B cell (primary cell): ENCODE measurements at regions of chr7 and their contacts with region 1.

Region 1: GRCh38 chr7:101138213-101138870 is 11.4 kb downstream of the SERPINE1 start:
- DNase-seq: peak; percentile 62
- ATAC-seq: peak; percentile 86
- H3K4me3 ChIP-seq: no peak overlapping the region
- H3K4me3 Mint-ChIP-seq: peak overlapping the region; percentile 74
- H3K27ac ChIP-seq: no peak overlapping the region
- H3K27ac Mint-ChIP-seq: peak overlapping the region; percentile 77
- H3K4me1 ChIP-seq: peaks cover 0 to 7% of the 10 kb centered on the region in 2 donors
- H3K4me1 Mint-ChIP-seq: peaks cover 13% of the 10 kb centered on the region
- H3K27me3 ChIP-seq: peaks cover 0 to 12% (median 5%) of the 10 kb centered on the region in 4 experiments
- H3K27me3 Mint-ChIP-seq: peaks cover 31% of the 10 kb centered on the region
- CTCF ChIP-seq: peak; percentile 72

Region 2: GRCh38 chr7:100444311-100445278 is 693.7 kb before region 1 on chr7:
- CTCF ChIA-PET with region 1: no interaction called
- POLR2A ChIA-PET with region 1: no interaction called
- intact Hi-C with region 1: no loop called
- DNase-seq: no peak
- ATAC-seq: peak; percentile 47
- H3K4me3 ChIP-seq: no peak overlapping the region
- H3K4me3 Mint-ChIP-seq: no peak overlapping the region
- H3K27ac ChIP-seq: peak overlapping the region; percentile 30 to 51
- H3K27ac Mint-ChIP-seq: peak overlapping the region; percentile 77
- H3K4me1 ChIP-seq: peaks cover 15 to 22% of the 10 kb centered on the region in 2 donors
- H3K4me1 Mint-ChIP-seq: peaks cover 15% of the 10 kb centered on the region
- H3K27me3 ChIP-seq: no peaks in the 10 kb centered on the region
- H3K27me3 Mint-ChIP-seq: no peaks in the 10 kb centered on the region
- CTCF ChIP-seq: no peak

Region 3: GRCh38 chr7:100889761-100890634 is 248.3 kb before region 1 on chr7:
- CTCF ChIA-PET with region 1: interaction called, 7 read pairs
- POLR2A ChIA-PET with region 1: no interaction called
- intact Hi-C with region 1: loop called (anchors 10 kb)
- DNase-seq: peak; percentile 94
- ATAC-seq: peak; percentile 82
- H3K4me3 ChIP-seq: peak overlapping the region in 4 of 5 experiments; percentile 57 to 80 (median 72)
- H3K4me3 Mint-ChIP-seq: peak overlapping the region; percentile 87
- H3K27ac ChIP-seq: no peak overlapping the region
- H3K27ac Mint-ChIP-seq: peak overlapping the region; percentile 82
- H3K4me1 ChIP-seq: peaks cover 43 to 54% of the 10 kb centered on the region in 2 donors
- H3K4me1 Mint-ChIP-seq: peaks cover 48% of the 10 kb centered on the region
- H3K27me3 ChIP-seq: peaks cover 0 to 46% (median 12%) of the 10 kb centered on the region in 4 experiments
- H3K27me3 Mint-ChIP-seq: peaks cover 22% of the 10 kb centered on the region
- CTCF ChIP-seq: no peak

Region 4: DNA sequence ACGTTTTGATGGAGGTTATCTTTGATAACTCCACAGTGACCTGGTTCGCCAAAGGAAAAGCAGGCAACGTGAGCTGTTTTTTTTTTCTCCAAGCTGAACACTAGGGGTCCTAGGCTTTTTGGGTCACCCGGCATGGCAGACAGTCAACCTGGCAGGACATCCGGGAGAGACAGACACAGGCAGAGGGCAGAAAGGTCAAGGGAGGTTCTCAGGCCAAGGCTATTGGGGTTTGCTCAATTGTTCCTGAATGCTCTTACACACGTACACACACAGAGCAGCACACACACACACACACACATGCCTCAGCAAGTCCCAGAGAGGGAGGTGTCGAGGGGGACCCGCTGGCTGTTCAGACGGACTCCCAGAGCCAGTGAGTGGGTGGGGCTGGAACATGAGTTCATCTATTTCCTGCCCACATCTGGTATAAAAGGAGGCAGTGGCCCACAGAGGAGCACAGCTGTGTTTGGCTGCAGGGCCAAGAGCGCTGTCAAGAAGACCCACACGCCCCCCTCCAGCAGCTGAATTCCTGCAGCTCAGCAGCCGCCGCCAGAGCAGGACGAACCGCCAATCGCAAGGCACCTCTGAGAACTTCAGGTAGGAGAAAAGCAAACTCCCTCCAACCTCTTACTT is 11.6 kb before region 1 on chr7 and contains the start of gene SERPINE1:
- CTCF ChIA-PET with region 1: interaction called, 28 read pairs
- POLR2A ChIA-PET with region 1: no interaction called
- intact Hi-C with region 1: no loop called
- DNase-seq: peak; percentile 33
- ATAC-seq: peak; percentile 53
- H3K4me3 ChIP-seq: peak within 1 kb of the TSS in 2 of 5 experiments; percentile 1
- H3K4me3 Mint-ChIP-seq: peak within 1 kb of the TSS; percentile 82
- H3K27ac ChIP-seq: no peak within 1 kb of the TSS
- H3K27ac Mint-ChIP-seq: peak within 1 kb of the TSS; percentile 75
- H3K4me1 ChIP-seq: peaks cover 24% of the 10 kb centered on the region in 2 donors
- H3K4me1 Mint-ChIP-seq: peaks cover 46% of the 10 kb centered on the region
- H3K27me3 ChIP-seq: peaks cover 0 to 22% (median 7%) of the 10 kb centered on the region in 4 experiments
- H3K27me3 Mint-ChIP-seq: peaks cover 38% of the 10 kb centered on the region
- CTCF ChIP-seq: no peak
- total RNA-seq, gene SERPINE1: 0.07 TPM in 1 of 2 replicates, not detected in the other

Region 5: GRCh38 chr7:101165075-101165957 is 27.0 kb after region 1 on chr7 and contains the start of gene VGF:
- CTCF ChIA-PET with region 1: interaction called, 23 read pairs
- POLR2A ChIA-PET with region 1: no interaction called
- intact Hi-C with region 1: no loop called
- DNase-seq: peak; percentile 95
- ATAC-seq: peak; percentile 83
- H3K4me3 ChIP-seq: peak within 1 kb of the TSS in 3 of 5 experiments; percentile 0 to 58 (median 17)
- H3K4me3 Mint-ChIP-seq: peak within 1 kb of the TSS; percentile 82
- H3K27ac ChIP-seq: no peak within 1 kb of the TSS
- H3K27ac Mint-ChIP-seq: peak within 1 kb of the TSS; percentile 81
- H3K4me1 ChIP-seq: peaks cover 56 to 67% of the 10 kb centered on the region in 2 donors
- H3K4me1 Mint-ChIP-seq: peaks cover 42% of the 10 kb centered on the region
- H3K27me3 ChIP-seq: peaks cover 0 to 79% (median 55%) of the 10 kb centered on the region in 4 experiments
- H3K27me3 Mint-ChIP-seq: peaks cover 51% of the 10 kb centered on the region
- CTCF ChIP-seq: no peak
- total RNA-seq, gene VGF: 0.12 and 0.17 TPM in 2 replicates

Region 6: DNA sequence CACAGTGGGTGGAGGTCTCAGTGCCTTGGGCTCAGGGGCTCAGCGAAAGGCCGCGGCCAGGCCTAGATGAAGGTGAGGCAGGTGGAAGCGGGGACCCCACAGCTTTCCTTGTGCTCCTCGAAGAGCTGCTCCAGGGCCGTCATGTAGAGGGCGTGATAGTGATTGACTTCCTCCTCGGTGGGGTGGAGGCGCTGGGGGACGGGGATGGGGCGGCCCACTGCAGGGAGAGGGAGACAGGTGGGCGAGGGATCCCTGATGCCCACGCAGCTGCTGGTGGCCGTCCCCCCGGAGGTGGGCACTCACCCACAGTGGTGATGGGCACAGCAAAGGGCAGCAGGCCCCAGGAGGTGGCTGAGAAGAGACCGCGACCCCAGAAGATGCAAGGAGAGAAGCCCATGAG is 57.5 kb after region 1 on chr7:
- CTCF ChIA-PET with region 1: interaction called, 129 read pairs
- POLR2A ChIA-PET with region 1: interaction called, 4 read pairs
- intact Hi-C with region 1: loop called (anchors 1 kb)
- DNase-seq: no peak
- ATAC-seq: no peak
- H3K4me3 ChIP-seq: no peak overlapping the region
- H3K4me3 Mint-ChIP-seq: no peak overlapping the region
- H3K27ac ChIP-seq: no peak overlapping the region
- H3K27ac Mint-ChIP-seq: no peak overlapping the region
- H3K4me1 ChIP-seq: peaks cover 2 to 3% of the 10 kb centered on the region in 2 donors
- H3K4me1 Mint-ChIP-seq: peaks cover 2% of the 10 kb centered on the region
- H3K27me3 ChIP-seq: peaks cover 0 to 23% (median 8%) of the 10 kb centered on the region in 4 experiments
- H3K27me3 Mint-ChIP-seq: peaks cover 10% of the 10 kb centered on the region
- CTCF ChIP-seq: no peak

Region 7: DNA sequence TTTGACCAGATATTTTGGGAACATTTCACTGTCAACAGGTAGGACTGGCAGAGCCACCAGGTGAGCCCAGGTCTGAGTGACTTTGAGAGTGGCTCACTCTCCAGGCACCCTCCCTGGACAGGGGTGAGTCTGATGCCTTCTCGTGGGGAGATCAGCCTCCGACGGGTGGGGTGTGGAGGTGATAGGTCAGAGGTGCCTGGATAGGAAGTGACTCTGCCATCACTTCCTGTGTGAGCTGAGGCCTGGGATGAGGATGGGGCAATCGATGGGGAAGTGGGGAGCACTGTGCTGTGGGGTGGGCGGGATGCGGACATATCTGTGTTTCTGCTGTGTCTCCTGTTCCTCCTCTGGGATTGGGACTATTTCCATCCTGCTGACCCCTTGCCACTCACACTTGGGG is 148.7 kb after region 1 on chr7:
- CTCF ChIA-PET with region 1: interaction called, 156 read pairs
- POLR2A ChIA-PET with region 1: no interaction called
- intact Hi-C with region 1: no loop called
- DNase-seq: no peak
- ATAC-seq: no peak
- H3K4me3 ChIP-seq: no peak overlapping the region
- H3K4me3 Mint-ChIP-seq: no peak overlapping the region
- H3K27ac ChIP-seq: no peak overlapping the region
- H3K27ac Mint-ChIP-seq: no peak overlapping the region
- H3K4me1 ChIP-seq: peaks cover 0 to 13% of the 10 kb centered on the region in 2 donors
- H3K4me1 Mint-ChIP-seq: peaks cover 19% of the 10 kb centered on the region
- H3K27me3 ChIP-seq: peaks cover 0 to 6% (median 2%) of the 10 kb centered on the region in 4 experiments
- H3K27me3 Mint-ChIP-seq: peaks cover 10% of the 10 kb centered on the region
- CTCF ChIP-seq: no peak

Region 8: GRCh38 chr7:101666741-101667140 is 528.4 kb after region 1 on chr7:
- CTCF ChIA-PET with region 1: no interaction called
- POLR2A ChIA-PET with region 1: no interaction called
- intact Hi-C with region 1: no loop called
- DNase-seq: no peak
- ATAC-seq: no peak
- H3K4me3 ChIP-seq: no peak overlapping the region
- H3K4me3 Mint-ChIP-seq: no peak overlapping the region
- H3K27ac ChIP-seq: no peak overlapping the region
- H3K27ac Mint-ChIP-seq: no peak overlapping the region
- H3K4me1 ChIP-seq: no peaks in the 10 kb centered on the region
- H3K4me1 Mint-ChIP-seq: no peaks in the 10 kb centered on the region
- H3K27me3 ChIP-seq: peaks cover 0 to 4% (median 0%) of the 10 kb centered on the region in 4 experiments
- H3K27me3 Mint-ChIP-seq: peaks cover 8% of the 10 kb centered on the region
- CTCF ChIP-seq: no peak